Panc1 (cell line): ENCODE measurements at regions of chr1 and their contacts with region 1.

Region 1: DNA sequence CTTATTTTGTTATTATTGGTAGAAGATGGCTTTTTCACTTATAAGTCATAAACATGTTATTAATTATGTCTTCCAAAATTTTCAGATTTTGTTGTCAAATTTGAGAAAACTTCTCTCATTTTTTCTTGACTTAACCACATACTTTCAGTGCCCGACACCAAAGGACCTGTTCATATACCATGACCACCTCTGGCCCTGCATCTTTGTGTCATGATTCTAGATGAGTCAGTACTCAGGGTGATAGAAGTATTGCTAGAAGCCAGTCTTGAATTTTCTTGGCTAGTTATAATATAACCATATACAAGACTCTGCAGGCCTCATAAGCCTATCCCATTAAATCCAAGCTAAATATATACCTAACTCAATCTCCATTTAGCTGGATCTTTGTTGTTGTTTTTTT is 35.4 kb upstream of the DPH5 start:
- DNase-seq: no peak
- ATAC-seq: no peak
- H3K4me3 ChIP-seq: no peak overlapping the region
- H3K27ac ChIP-seq: no peak overlapping the region
- H3K4me1 ChIP-seq: no peaks in the 10 kb centered on the region
- H3K27me3 ChIP-seq: no peaks in the 10 kb centered on the region
- CTCF ChIP-seq: no peak

Region 2: DNA sequence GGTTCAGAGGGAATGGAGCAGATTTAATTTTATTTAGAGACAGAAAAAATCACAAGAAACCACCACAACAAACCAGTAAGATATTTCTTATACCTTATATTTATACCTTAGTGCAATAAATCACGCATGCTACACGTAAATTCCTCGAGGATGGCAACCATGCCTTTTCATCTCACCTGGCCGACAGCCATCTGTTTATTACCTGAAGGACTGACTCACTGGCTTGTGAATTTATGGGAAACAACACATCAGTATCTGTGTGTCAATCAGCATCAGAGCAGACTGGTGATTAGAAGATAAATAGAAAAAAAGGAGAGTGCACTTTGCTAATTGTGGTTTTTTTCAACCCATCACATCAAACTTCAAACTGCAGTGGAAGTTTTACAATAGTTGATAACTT is 234.2 kb after region 1 on chr1:
- CTCF ChIA-PET with region 1: interaction called, 15 read pairs
- POLR2A ChIA-PET with region 1: no interaction called
- in situ Hi-C with region 1: no loop called
- intact Hi-C with region 1: no loop called
- DNase-seq: no peak
- ATAC-seq: no peak
- H3K4me3 ChIP-seq: no peak overlapping the region
- H3K27ac ChIP-seq: no peak overlapping the region
- H3K4me1 ChIP-seq: no peaks in the 10 kb centered on the region
- H3K27me3 ChIP-seq: no peaks in the 10 kb centered on the region; the same call in none of the 2 replicates
- CTCF ChIP-seq: no peak